Mammary epithelial cell (primary cell): ENCODE measurements at regions of chr1 and their contacts with region 1.

Region 1: DNA sequence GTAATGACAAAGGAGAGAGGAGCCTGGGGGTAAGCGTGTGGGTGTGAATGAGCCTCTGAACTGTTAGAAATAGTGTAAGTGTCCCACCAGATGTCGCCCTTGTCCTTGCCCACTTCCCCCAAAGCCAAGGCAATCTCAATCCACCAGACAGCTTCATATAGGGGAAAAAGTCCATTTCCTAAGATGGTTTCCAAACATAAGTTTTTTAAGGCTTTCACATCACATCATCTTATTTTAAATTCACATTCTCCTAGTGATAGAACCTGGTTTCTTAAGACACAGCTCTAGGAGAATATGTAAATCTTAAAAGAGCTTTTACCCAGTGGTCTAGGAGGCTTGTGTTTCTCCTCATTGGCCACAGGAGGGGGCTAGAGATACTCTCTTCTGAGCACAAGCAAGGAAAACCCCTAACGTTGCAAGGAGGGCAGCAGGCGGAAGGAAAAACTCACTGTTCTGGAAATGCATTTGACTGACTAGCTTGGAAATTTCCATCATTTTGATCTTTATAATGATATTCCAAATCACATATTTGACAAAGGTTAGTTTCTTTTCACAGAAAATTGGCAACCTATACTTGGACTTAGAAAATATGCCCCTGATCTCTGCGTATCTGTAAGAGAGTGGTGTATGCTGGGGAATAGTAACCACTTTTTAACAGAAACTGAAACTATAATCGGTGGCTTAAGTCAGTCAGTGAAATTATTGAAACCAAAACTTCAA is 51.9 kb upstream of the LPAR3 start:
- DNase-seq: peak; percentile 81
- H3K4me3 ChIP-seq: peak overlapping the region in 2 of 3 experiments; percentile 35 to 42
- H3K27ac ChIP-seq: peak overlapping the region; percentile 66
- H3K4me1 ChIP-seq: peaks cover 29% of the 10 kb centered on the region
- H3K27me3 ChIP-seq: no peaks in the 10 kb centered on the region
- CTCF ChIP-seq: peak; percentile 76 to 93

Region 2: DNA sequence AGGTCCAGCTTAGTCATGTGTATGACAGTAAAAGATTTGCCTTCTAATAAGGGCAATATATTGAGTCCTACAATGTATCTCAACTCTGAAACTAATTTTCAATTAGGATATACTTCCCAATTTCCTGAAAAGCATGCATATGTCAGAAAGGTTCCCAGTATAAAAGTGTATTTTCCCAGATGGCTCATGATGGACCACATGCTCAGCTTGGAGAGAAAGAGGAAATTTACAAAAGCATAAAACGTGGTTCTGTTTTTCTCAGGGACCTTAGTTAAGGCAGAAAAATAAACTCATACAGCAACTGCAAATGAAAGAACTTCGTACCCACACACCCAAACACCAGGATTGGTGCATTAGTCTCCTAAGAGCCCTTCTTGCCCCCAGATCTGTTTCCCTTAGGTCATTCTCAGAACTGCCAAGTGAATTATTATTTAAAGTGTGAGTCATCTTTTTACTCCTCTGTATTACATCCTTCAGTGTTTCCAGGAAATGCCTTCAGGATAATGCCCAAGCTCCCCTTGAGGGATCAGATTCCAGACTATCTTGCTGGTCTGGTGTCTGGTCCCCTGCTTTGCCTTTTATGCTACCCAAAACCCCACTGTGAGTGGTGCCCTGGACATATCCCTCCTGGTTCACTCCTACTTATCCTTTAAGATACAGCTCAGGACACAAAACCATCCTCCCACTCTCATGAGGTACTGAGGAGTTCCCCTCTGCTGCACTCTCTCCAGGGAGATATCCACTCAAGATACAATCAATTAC is 312.1 kb before region 1 on chr1:
- CTCF ChIA-PET with region 1: no interaction called
- dilution Hi-C with region 1: no loop called
- in situ Hi-C with region 1: loop called in 1 of 2 experiments (anchors 25 kb)
- intact Hi-C with region 1: no loop called
- DNase-seq: peak; percentile 61
- H3K4me3 ChIP-seq: no peak overlapping the region
- H3K27ac ChIP-seq: no peak overlapping the region
- H3K4me1 ChIP-seq: peaks cover 31% of the 10 kb centered on the region
- H3K27me3 ChIP-seq: no peaks in the 10 kb centered on the region
- CTCF ChIP-seq: no peak

Region 3: DNA sequence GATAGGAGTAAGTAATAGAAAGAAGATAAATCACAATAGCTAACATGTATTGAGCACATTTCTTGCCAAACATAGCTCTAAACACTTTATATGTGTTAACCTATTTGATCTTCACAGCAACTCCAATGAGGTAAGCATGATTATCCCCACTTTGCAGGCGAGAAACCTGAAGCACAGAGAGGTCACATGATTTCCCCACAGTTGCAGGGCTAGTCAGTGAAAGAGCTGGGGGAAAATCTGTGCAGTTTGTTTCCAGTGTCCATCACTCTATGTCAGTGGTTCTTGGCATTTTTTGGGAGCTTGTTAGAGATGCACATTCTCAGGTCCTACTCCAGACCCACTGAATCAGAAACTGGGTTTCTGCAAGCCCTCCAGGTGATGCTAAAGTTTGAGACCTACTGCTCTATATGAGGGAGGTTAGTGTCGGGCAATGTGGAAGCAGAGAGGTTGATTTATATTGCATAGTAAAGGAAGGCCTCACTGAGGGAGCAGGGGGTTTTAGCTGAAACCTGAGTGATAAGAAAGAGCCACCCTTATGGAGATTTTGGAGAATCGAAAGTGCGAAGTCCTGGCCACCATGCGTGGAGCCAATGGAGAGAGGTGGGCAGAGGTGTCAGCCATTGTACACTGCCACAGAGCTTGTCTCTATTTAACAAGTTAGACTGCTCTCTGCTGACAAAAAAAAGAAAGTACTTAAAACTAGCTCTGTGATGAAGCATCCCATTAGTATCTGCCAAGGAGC is 82.5 kb after region 1 on chr1:
- CTCF ChIA-PET with region 1: interaction called, 14 read pairs
- dilution Hi-C with region 1: no loop called
- in situ Hi-C with region 1: no loop called
- intact Hi-C with region 1: loop called (anchors 1 kb)
- DNase-seq: no peak
- H3K4me3 ChIP-seq: no peak overlapping the region
- H3K27ac ChIP-seq: no peak overlapping the region
- H3K4me1 ChIP-seq: no peaks in the 10 kb centered on the region
- H3K27me3 ChIP-seq: no peaks in the 10 kb centered on the region
- CTCF ChIP-seq: peak in 1 of 2 donors; percentile 21

Region 4: DNA sequence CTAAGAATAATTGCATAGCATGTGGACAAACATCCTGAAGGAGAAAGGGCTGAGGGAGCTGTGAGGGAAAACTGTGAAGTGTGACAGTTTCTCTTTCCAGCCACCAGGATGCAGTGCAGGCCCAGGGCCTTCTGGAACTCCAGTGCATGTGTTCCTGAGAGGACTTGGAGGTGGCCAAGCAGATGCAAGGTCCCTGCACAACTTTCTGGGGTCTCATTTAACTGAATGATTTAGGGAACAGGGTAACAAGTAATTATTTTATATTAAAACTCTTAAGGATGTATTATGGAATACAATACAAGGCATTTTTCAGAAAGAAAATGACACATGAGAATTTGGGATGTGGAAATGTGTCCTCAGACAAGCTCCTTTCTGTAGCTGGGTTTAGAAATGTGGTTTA is 164.5 kb after region 1 on chr1:
- CTCF ChIA-PET with region 1: interaction called, 3 read pairs
- dilution Hi-C with region 1: no loop called
- in situ Hi-C with region 1: no loop called
- intact Hi-C with region 1: loop called (anchors 1 kb)
- DNase-seq: peak; percentile 35
- H3K4me3 ChIP-seq: no peak overlapping the region
- H3K27ac ChIP-seq: no peak overlapping the region
- H3K4me1 ChIP-seq: no peaks in the 10 kb centered on the region
- H3K27me3 ChIP-seq: no peaks in the 10 kb centered on the region
- CTCF ChIP-seq: peak; percentile 87 to 95

Region 5: GRCh38 chr1:85240174-85240601 is 295.3 kb after region 1 on chr1:
- CTCF ChIA-PET with region 1: interaction called, 12 read pairs
- dilution Hi-C with region 1: no loop called
- in situ Hi-C with region 1: loop called in 1 of 2 experiments (anchors 10 kb)
- intact Hi-C with region 1: loop called (anchors 1 kb)
- DNase-seq: no peak
- H3K4me3 ChIP-seq: no peak overlapping the region
- H3K27ac ChIP-seq: no peak overlapping the region
- H3K4me1 ChIP-seq: peaks cover 9% of the 10 kb centered on the region
- H3K27me3 ChIP-seq: no peaks in the 10 kb centered on the region
- CTCF ChIP-seq: peak; percentile 24 to 55

Region 6: GRCh38 chr1:85398391-85399064 is 453.6 kb after region 1 on chr1:
- CTCF ChIA-PET with region 1: no interaction called
- dilution Hi-C with region 1: no loop called
- in situ Hi-C with region 1: no loop called
- intact Hi-C with region 1: loop called (anchors 2 kb)
- DNase-seq: peak; percentile 51
- H3K4me3 ChIP-seq: no peak overlapping the region
- H3K27ac ChIP-seq: no peak overlapping the region
- H3K4me1 ChIP-seq: no peaks in the 10 kb centered on the region
- H3K27me3 ChIP-seq: no peaks in the 10 kb centered on the region
- CTCF ChIP-seq: peak; percentile 54 to 62